A549 (cell line): ENCODE measurements at regions of chr16 and their contacts with region 1.

Region 1: GRCh38 chr16:86824751-86825296 is 246.5 kb downstream of the FOXL1 start:
- DNase-seq: no peak
- ATAC-seq: no peak
- H3K4me3 ChIP-seq: no peak overlapping the region
- H3K27ac ChIP-seq: peak overlapping the region in 1 of 2 experiments; percentile 30; a peak in 1 of 6 replicates
- H3K4me1 ChIP-seq: no peaks in the 10 kb centered on the region
- CTCF ChIP-seq: no peak
- EP300 ChIP-seq: no peak
- POLR2A ChIP-seq: no peak
- RAD21 ChIP-seq: no peak

Region 2: DNA sequence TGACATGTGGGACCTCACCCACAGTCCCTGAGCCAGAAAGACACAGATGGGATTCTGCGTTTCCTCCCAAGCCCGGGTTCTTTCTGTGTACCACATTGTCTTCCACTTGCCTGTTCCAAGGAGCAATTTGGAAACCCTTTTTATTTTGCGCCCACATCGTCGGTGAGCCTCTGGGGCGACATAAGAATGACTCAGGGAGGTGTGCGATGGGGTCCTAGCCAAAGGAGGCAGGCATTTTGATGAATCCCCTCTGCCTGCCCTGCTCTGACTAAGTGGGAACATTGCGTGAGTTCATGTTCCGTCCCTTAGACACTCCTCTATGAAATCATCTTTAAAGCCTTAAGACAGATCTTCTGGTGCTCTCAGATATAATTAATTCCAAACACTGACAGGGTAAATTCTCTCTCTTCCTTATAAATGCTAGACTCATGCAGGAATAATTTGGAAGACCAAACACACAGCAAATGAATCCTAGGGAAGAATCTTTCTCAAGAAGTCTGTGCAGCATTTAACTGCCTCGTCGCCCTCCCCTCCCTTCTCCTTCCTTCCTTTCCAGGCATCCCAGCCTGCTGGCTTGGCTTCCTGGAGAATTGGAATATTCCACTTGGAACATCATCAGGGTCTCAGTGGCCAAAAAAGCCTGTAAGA is 367.2 kb before region 1 on chr16:
- CTCF ChIA-PET with region 1: no interaction called
- POLR2A ChIA-PET with region 1: no interaction called
- DNase-seq: no peak
- ATAC-seq: no peak; a peak in 1 of 6 replicates
- H3K4me3 ChIP-seq: no peak overlapping the region
- H3K27ac ChIP-seq: no peak overlapping the region
- H3K4me1 ChIP-seq: no peaks in the 10 kb centered on the region
- CTCF ChIP-seq: no peak
- EP300 ChIP-seq: no peak
- POLR2A ChIP-seq: no peak
- RAD21 ChIP-seq: no peak

Region 3: GRCh38 chr16:86531191-86531545 is 293.7 kb before region 1 on chr16:
- CTCF ChIA-PET with region 1: no interaction called
- POLR2A ChIA-PET with region 1: no interaction called
- DNase-seq: no peak
- ATAC-seq: no peak
- H3K4me3 ChIP-seq: no peak overlapping the region
- H3K27ac ChIP-seq: no peak overlapping the region
- H3K4me1 ChIP-seq: no peaks in the 10 kb centered on the region
- CTCF ChIP-seq: no peak
- EP300 ChIP-seq: no peak
- POLR2A ChIP-seq: no peak
- RAD21 ChIP-seq: no peak

Region 4: GRCh38 chr16:86631441-86631840 is 193.4 kb before region 1 on chr16:
- CTCF ChIA-PET with region 1: no interaction called
- POLR2A ChIA-PET with region 1: no interaction called
- DNase-seq: peak; percentile 24
- ATAC-seq: peak; percentile 17 to 38; a peak in 2 of 6 replicates
- H3K4me3 ChIP-seq: no peak overlapping the region
- H3K27ac ChIP-seq: 0 out of 6 replicates have a peak overlapping the region, but pooled peaks of 1 of the 2 experiments have one; percentile 10
- H3K4me1 ChIP-seq: peaks cover 11% of the 10 kb centered on the region; the same call in 1 of the 3 replicates
- CTCF ChIP-seq: no peak
- EP300 ChIP-seq: no peak
- POLR2A ChIP-seq: no peak
- RAD21 ChIP-seq: no peak

Region 5: GRCh38 chr16:86809458-86809981 is 15.3 kb before region 1 on chr16:
- CTCF ChIA-PET with region 1: interaction called, 12 read pairs
- POLR2A ChIA-PET with region 1: no interaction called
- DNase-seq: peak; percentile 51 to 64
- ATAC-seq: peak; percentile 82 to 83; a peak in 5 of 6 replicates
- H3K4me3 ChIP-seq: no peak overlapping the region
- H3K27ac ChIP-seq: peak overlapping the region; percentile 23 to 65; a peak in 4 of 6 replicates
- H3K4me1 ChIP-seq: peaks cover 16% of the 10 kb centered on the region
- CTCF ChIP-seq: peak; percentile 19; the same call in 1 of the 3 replicates
- EP300 ChIP-seq: no peak
- POLR2A ChIP-seq: no peak
- RAD21 ChIP-seq: peak; percentile 47 to 49; a peak in 4 of 5 replicates